Lower lobe of right lung (tissue), 2 donors: ENCODE measurements at regions of chrX and their contacts with region 1.

Region 1: GRCh38 chrX:136920001-136920400 is 39.5 kb upstream of the RBMX start:
- DNase-seq: no peak
- ATAC-seq: no peak
- H3K4me3 ChIP-seq: no peak overlapping the region
- H3K27ac ChIP-seq: no peak overlapping the region
- H3K4me1 ChIP-seq: no peaks in the 10 kb centered on the region
- H3K27me3 ChIP-seq: no peaks in the 10 kb centered on the region
- CTCF ChIP-seq: no peak

Region 2: GRCh38 chrX:136711147-136711546 is 208.9 kb before region 1 on chrX:
- intact Hi-C with region 1: loop called (anchors 10 kb)
- DNase-seq: peak; percentile 43
- ATAC-seq: no peak
- H3K4me3 ChIP-seq: no peak overlapping the region
- H3K27ac ChIP-seq: no peak overlapping the region
- H3K4me1 ChIP-seq: peaks cover 10% of the 10 kb centered on the region
- H3K27me3 ChIP-seq: no peaks in the 10 kb centered on the region
- CTCF ChIP-seq: peak; percentile 49